Keratinocyte (primary cell): ENCODE measurements at regions of chr7 and their contacts with region 1.

Region 1: DNA sequence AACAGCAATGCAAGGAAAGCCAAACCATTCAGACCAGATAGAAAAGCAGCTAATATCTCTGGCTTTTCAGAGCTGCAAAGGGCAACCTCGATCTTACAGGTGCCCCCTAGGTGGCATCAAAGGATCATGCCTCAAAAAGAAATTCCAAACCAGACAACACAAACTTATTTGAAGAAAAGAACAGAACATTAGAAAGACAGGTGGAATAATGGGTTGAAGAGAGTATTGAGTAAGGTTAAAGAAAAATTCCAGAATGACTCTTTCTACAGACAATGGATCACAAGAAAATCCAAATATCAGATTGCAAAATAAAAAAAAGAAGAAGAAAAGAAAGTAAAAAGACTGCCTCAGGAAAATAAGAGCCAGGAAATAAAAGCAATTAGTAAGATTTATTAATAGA is 213.7 kb downstream of the ELMO1 start:
- DNase-seq: no peak
- H3K4me3 ChIP-seq: no peak overlapping the region
- H3K27ac ChIP-seq: no peak overlapping the region
- H3K4me1 ChIP-seq: no peaks in the 10 kb centered on the region
- H3K27me3 ChIP-seq: no peaks in the 10 kb centered on the region
- CTCF ChIP-seq: peak in 2 of 3 experiments; percentile 38 to 62

Region 2: GRCh38 chr7:36967387-36967786 is 267.5 kb before region 1 on chr7:
- dilution Hi-C with region 1: no loop called
- DNase-seq: no peak
- H3K4me3 ChIP-seq: no peak overlapping the region
- H3K27ac ChIP-seq: no peak overlapping the region
- H3K4me1 ChIP-seq: no peaks in the 10 kb centered on the region
- H3K27me3 ChIP-seq: no peaks in the 10 kb centered on the region
- CTCF ChIP-seq: peak; percentile 70 to 73 (median 73)

Region 3: DNA sequence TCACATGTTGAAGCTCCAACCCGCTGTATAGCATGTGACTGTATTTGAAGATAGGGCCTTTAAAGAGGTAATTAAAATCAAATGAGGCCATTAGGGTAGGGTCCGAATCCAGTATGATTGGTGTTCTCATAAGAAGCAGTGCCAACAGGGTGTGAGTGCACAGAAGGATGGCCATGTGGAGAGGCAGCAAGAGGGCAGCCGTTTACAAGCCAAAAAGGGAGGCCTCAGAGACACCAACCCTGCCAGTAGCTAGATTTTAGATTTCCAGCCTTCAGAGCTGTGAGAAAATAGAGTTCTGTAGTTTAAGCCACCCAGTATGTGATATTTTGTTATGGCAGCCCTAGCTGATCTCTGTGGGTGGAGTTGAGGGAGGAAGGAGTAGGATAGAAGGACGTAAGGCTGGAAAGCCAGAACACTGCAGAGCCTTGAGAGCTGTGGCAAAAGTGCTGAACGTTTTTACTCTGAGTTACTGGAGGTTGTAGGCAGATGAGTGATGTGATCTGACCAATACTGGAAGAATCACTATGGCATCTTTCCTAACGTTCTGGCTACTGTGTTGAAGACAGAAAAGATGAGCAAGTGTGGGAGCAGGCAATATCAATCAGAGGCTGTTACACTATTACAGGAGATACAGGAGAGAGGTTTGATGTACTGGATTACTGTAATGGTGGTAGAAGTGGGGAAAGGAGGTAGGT is 121.1 kb before region 1 on chr7:
- dilution Hi-C with region 1: no loop called
- DNase-seq: no peak
- H3K4me3 ChIP-seq: no peak overlapping the region
- H3K27ac ChIP-seq: no peak overlapping the region
- H3K4me1 ChIP-seq: no peaks in the 10 kb centered on the region
- H3K27me3 ChIP-seq: no peaks in the 10 kb centered on the region
- CTCF ChIP-seq: no peak

Region 4: DNA sequence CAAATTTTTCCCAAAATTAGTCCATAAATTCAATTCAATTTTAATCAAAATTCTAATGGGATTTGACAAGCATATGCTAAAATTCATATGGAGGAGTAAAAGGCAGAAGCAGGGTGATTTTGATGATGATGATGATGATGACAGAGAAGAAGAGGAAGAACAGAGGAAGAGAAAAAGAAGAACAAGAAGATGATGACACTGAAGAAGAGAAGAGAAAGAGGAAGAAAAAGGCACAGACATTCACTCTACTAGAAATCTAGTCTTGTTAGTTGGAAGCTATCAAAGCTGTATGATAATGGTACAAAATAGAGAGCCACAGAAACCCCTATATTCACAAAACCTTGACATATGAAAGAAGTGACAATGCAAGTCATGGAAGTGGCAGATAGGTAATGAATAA is 55.8 kb after region 1 on chr7:
- dilution Hi-C with region 1: loop called (anchors 5 kb)
- DNase-seq: no peak
- H3K4me3 ChIP-seq: no peak overlapping the region
- H3K27ac ChIP-seq: no peak overlapping the region
- H3K4me1 ChIP-seq: no peaks in the 10 kb centered on the region
- H3K27me3 ChIP-seq: no peaks in the 10 kb centered on the region
- CTCF ChIP-seq: no peak